Activated T-helper 2 cell treated with anti-CD3 and anti-CD28 coated beads, Interferon-gamma antibody, Interleukin-2, Interleukin-4, amounts not matched to agents 10 μg/mL and 5 μg/mL and 100 μg/mL, durations not matched to agents 14 hours and 24 hours and 36 hours (primary cell): ENCODE measurements at regions of chr2 and their contacts with region 1.

Region 1: GRCh38 chr2:237154082-237154638 is 68.5 kb downstream of the COPS8 start:
- DNase-seq: peak; percentile 36
- H3K4me3 Mint-ChIP-seq: no peak overlapping the region
- H3K27ac Mint-ChIP-seq: no peak overlapping the region
- H3K4me1 Mint-ChIP-seq: peaks cover 34% of the 10 kb centered on the region
- H3K27me3 Mint-ChIP-seq: no peaks in the 10 kb centered on the region

Region 2: DNA sequence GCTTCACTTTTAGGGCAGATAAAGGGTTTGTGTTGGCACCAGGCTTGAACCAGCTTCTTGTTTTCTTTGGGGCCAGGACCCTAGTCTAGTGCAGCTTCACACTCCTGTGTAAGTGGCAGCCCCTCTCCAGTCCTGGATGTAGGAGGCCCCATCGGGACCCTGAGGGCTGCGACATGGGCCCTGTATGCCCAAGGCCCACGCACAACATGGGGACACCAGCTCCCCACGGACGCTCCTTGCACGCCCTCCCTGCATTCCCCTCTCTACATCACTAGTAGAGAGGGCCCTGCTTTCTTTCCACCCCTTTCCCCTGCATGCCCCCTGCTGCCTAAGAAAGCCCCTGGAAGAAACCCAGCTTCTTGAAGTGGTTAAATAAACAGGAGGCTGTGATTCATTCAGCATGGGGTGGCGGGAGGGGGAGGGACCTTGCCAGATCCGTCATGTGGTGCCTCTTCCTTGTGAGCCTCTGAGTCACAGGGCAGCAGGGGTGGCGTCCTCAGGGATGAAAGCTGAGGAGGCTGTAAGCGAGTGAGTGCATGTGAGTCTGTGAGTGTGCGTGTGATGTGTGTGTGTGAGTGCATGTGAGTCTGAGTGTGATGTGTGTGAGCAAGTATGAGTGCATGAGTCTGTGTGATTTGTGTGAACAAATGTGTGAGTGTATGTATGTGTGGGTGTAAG is 26.0 kb before region 1 on chr2:
- intact Hi-C with region 1: no loop called
- DNase-seq: no peak
- H3K4me3 Mint-ChIP-seq: no peak overlapping the region
- H3K27ac Mint-ChIP-seq: no peak overlapping the region
- H3K4me1 Mint-ChIP-seq: no peaks in the 10 kb centered on the region
- H3K27me3 Mint-ChIP-seq: no peaks in the 10 kb centered on the region

Region 3: DNA sequence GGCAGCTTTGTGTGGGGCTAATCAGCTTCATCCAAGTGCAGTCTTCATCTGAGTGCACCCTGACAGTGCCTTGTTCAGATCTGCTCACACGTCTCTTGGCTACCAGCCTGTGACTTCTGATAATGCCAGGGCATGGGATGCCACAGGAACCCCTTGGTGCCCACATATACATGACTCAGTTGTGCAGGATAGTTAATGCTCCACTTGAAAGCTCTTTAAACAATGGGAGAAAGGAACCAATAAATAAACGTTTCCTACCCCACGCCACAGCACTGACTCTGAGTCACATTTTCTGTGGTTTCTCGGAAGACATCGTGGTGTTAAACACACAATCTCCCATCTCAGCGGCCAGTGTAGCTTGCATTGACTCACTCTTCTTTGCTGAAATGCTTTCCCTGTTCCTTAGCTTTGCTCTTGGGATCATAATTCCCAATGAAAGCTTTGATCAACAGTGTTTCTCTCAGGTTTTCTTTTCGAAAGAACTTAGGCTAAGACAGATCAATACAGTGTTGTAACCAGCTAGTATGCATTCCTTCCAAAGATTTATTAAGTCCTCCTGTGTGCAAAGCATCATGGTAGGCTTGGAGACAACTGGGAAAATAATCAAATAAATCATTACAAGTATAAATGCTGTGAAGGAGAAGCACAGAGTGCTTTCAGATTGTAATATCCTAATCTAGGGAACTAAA is 73.6 kb after region 1 on chr2:
- intact Hi-C with region 1: loop called (anchors 2 kb)
- DNase-seq: no peak
- H3K4me3 Mint-ChIP-seq: no peak overlapping the region
- H3K27ac Mint-ChIP-seq: peak overlapping the region; percentile 33
- H3K4me1 Mint-ChIP-seq: peaks cover 19% of the 10 kb centered on the region
- H3K27me3 Mint-ChIP-seq: peaks cover 16% of the 10 kb centered on the region

Region 4: DNA sequence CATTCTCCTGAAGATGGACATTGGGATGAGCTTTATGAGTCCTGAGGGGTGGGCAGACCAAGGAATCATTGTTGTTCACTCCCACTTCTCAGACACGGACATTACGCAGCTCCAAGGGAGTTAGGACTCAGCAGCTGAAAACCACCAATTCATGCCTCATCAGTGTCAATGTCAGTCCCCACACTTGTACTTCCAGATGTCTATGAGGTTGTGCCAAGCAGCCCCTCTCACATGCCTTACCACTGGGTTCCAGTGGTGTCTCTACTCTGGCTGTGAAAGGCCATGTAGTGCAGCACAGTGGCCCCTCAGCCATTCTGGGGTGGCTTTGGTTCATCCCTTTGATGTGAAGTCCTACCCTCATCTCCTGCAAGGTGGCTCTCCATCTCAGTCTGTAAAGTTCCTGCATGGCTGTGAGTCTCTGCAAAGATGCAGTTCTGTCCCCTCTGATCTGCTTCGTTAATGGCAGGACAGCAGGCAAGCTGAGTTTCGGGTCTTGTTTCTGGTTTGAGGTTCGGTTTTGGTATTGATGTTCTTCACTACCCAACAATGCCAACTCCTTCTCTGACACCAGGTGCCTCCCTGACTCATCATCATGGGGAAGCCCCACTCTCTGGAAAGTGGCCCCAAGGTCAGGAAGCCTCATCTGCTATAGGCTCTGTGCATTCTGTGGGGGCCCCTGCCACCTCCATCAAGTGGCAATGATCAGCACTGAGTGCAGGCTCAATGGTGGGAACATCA is 273.8 kb after region 1 on chr2:
- intact Hi-C with region 1: loop called (anchors 2 kb)
- DNase-seq: peak; percentile 31
- H3K4me3 Mint-ChIP-seq: peak overlapping the region; percentile 55
- H3K27ac Mint-ChIP-seq: peak overlapping the region; percentile 84
- H3K4me1 Mint-ChIP-seq: peaks cover 69% of the 10 kb centered on the region
- H3K27me3 Mint-ChIP-seq: peaks cover 3% of the 10 kb centered on the region

Region 5: GRCh38 chr2:237474931-237475703 is 321.0 kb after region 1 on chr2:
- intact Hi-C with region 1: loop called (anchors 1 kb)
- DNase-seq: peak; percentile 68
- H3K4me3 Mint-ChIP-seq: peak overlapping the region; percentile 84
- H3K27ac Mint-ChIP-seq: peak overlapping the region; percentile 87
- H3K4me1 Mint-ChIP-seq: peaks cover 14% of the 10 kb centered on the region
- H3K27me3 Mint-ChIP-seq: peaks cover 29% of the 10 kb centered on the region

Region 6: DNA sequence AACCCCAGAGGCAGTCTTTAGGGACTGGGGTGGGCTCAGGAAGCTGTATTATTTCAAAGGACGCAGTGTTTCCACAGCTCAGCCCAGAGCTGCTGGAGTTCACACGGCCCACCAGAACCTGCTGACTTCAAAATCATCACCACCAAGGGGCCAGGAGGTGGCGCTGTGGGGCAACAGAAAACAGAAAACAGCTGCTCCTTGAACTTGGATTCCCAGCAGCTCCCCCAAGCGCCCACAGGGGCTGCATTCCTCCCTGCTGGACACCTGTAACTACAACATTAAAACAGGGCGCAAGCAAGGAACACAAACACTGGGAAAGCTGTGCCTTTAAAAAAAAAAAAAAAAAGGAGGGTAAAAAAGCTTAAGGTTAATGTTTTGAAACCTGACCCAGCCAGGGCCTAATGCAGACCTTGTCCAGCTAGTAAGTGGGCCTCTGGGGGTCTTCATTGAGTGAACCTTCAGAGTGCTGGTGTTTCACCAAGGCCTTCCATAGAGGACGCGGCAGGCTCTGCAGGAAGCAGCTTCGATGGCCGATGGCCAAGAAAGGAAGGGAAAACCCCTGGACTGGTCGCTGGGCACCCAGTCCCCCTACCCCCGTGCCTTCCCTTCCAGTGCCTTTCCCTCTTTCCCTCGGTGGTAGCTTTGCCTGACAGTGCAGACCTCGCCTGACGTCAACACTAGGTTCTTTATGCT is 358.8 kb after region 1 on chr2:
- intact Hi-C with region 1: loop called (anchors 1 kb)
- DNase-seq: peak; percentile 64
- H3K4me3 Mint-ChIP-seq: no peak overlapping the region
- H3K27ac Mint-ChIP-seq: no peak overlapping the region
- H3K4me1 Mint-ChIP-seq: no peaks in the 10 kb centered on the region
- H3K27me3 Mint-ChIP-seq: peaks cover 1% of the 10 kb centered on the region

Region 7: GRCh38 chr2:237572021-237572741 is 418.0 kb after region 1 on chr2:
- intact Hi-C with region 1: loop called (anchors 1 kb)
- DNase-seq: peak; percentile 68
- H3K4me3 Mint-ChIP-seq: no peak overlapping the region
- H3K27ac Mint-ChIP-seq: no peak overlapping the region
- H3K4me1 Mint-ChIP-seq: no peaks in the 10 kb centered on the region
- H3K27me3 Mint-ChIP-seq: peaks cover 1% of the 10 kb centered on the region